ENCODE measurements at regions of chr10 and their contacts with region 1.

Region 1: GRCh38 chr10:33248638-33249037 is 85.8 kb downstream of the NRP1 start:
- DNase-seq: peak; percentile 18
- H3K4me3 Mint-ChIP-seq: peak overlapping the region; percentile 43
- H3K27ac Mint-ChIP-seq: peak overlapping the region; percentile 44
- H3K4me1 Mint-ChIP-seq: peaks cover 80% of the 10 kb centered on the region
- H3K27me3 Mint-ChIP-seq: peaks cover 25% of the 10 kb centered on the region

Region 2: GRCh38 chr10:32155042-32155531 is 1093.6 kb before region 1 on chr10:
- intact Hi-C with region 1: loop called (anchors 10 kb)
- DNase-seq: no peak
- H3K4me3 Mint-ChIP-seq: no peak overlapping the region
- H3K27ac Mint-ChIP-seq: no peak overlapping the region
- H3K4me1 Mint-ChIP-seq: peaks cover 34% of the 10 kb centered on the region
- H3K27me3 Mint-ChIP-seq: no peaks in the 10 kb centered on the region

Region 3: GRCh38 chr10:33134011-33134751 is 114.5 kb before region 1 on chr10:
- intact Hi-C with region 1: loop called (anchors 2 kb)
- DNase-seq: peak; percentile 64
- H3K4me3 Mint-ChIP-seq: peak overlapping the region; percentile 18
- H3K27ac Mint-ChIP-seq: peak overlapping the region; percentile 84
- H3K4me1 Mint-ChIP-seq: peaks cover 65% of the 10 kb centered on the region
- H3K27me3 Mint-ChIP-seq: no peaks in the 10 kb centered on the region

Region 4: DNA sequence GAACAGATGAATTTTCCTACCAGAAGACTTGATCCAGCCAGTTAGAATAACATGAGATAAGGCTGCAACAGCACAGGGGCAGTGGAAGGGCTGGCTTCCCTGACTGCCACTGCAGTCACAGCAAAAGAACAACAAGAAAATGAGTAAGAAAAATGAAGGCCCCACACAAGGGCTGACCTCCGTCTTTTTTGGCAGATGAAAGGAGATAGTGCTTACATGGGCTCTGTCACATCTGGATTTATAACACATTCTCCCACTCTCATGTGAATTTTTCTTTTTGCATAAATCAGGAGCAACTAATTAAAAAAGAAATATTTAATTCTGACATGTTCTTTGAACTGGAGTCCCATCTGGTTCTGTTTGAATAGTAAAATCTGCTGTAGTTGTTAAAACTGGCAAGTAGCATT is 13.8 kb before region 1 on chr10:
- intact Hi-C with region 1: loop called (anchors 1 kb)
- DNase-seq: no peak
- H3K4me3 Mint-ChIP-seq: no peak overlapping the region
- H3K27ac Mint-ChIP-seq: no peak overlapping the region
- H3K4me1 Mint-ChIP-seq: peaks cover 5% of the 10 kb centered on the region
- H3K27me3 Mint-ChIP-seq: peaks cover 50% of the 10 kb centered on the region

Region 5: GRCh38 chr10:33330543-33331378 is 82.1 kb after region 1 on chr10:
- intact Hi-C with region 1: loop called (anchors 2 kb)
- DNase-seq: peak; percentile 59
- H3K4me3 Mint-ChIP-seq: peak overlapping the region; percentile 14
- H3K27ac Mint-ChIP-seq: no peak overlapping the region
- H3K4me1 Mint-ChIP-seq: peaks cover 28% of the 10 kb centered on the region
- H3K27me3 Mint-ChIP-seq: peaks cover 48% of the 10 kb centered on the region